IMR-90 (cell line): ENCODE measurements at regions of chr4 and their contacts with region 1.

Region 1: DNA sequence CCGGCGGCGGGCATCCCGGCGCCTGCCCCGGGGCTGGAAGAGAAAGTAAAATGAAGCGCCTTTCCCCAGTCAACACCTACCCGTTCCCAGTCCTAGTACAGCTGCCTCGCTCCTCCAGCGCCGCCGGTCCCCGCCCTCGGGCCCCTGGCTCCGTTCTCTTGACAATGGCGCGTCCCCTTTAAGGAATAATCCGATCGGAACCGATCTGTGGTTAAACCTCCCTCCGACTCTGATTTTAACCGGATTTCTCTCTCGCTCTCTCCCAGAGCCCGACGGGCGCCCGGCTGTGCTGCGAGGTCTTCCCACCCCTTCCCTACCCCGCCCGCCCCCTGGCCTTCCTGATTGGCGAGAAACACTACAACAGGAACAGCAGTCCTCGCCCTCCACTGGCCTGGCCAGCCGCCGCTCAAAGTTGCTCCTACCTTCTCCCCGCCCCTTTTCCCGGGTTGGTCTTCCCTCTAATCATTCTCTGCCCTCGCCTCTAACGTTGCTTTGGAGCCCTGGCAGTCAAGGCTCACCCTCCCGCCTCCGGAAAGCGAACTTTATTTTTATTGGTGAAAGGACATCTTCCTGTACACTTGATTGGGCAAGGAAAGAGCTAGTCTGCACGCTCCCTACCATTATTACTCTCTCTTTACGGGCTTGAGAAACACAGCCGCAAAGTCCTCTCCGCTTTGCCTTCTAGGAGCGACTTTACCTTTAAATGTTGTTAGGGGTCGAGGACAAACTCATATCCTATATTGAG is at the start of gene FRYL:
- DNase-seq: peak; percentile 99
- ATAC-seq: peak; percentile 94
- H3K4me3 ChIP-seq: peak within 1 kb of the TSS; percentile 69
- H3K27ac ChIP-seq: peak within 1 kb of the TSS; percentile 85
- H3K4me1 ChIP-seq: peaks cover 6% of the 10 kb centered on the region
- H3K27me3 ChIP-seq: no peaks in the 10 kb centered on the region
- CTCF ChIP-seq: no peak
- POLR2A ChIP-seq: peak; percentile 79
- RAD21 ChIP-seq: no peak
- total RNA-seq, gene FRYL: 77.4 and 82.2 TPM in 2 replicates

Region 2: GRCh38 chr4:48578132-48578968 is 201.8 kb before region 1 on chr4:
- CTCF ChIA-PET with region 1: interaction called, 4 read pairs
- POLR2A ChIA-PET with region 1: no interaction called
- dilution Hi-C with region 1: no loop called
- in situ Hi-C with region 1: no loop called
- intact Hi-C with region 1: loop called (anchors 1 kb)
- DNase-seq: peak; percentile 78
- ATAC-seq: peak; percentile 99
- H3K4me3 ChIP-seq: no peak overlapping the region
- H3K27ac ChIP-seq: no peak overlapping the region
- H3K4me1 ChIP-seq: no peaks in the 10 kb centered on the region
- H3K27me3 ChIP-seq: no peaks in the 10 kb centered on the region
- CTCF ChIP-seq: peak; percentile 87
- POLR2A ChIP-seq: no peak
- RAD21 ChIP-seq: peak; percentile 86

Region 3: GRCh38 chr4:48629458-48629857 is 150.7 kb before region 1 on chr4:
- CTCF ChIA-PET with region 1: no interaction called
- POLR2A ChIA-PET with region 1: no interaction called
- dilution Hi-C with region 1: no loop called
- in situ Hi-C with region 1: no loop called
- intact Hi-C with region 1: no loop called
- DNase-seq: no peak
- ATAC-seq: no peak
- H3K4me3 ChIP-seq: no peak overlapping the region
- H3K27ac ChIP-seq: no peak overlapping the region
- H3K4me1 ChIP-seq: peaks cover 2% of the 10 kb centered on the region; the same call in 1 of the 2 replicates
- H3K27me3 ChIP-seq: no peaks in the 10 kb centered on the region
- CTCF ChIP-seq: no peak
- POLR2A ChIP-seq: no peak
- RAD21 ChIP-seq: no peak

Region 4: DNA sequence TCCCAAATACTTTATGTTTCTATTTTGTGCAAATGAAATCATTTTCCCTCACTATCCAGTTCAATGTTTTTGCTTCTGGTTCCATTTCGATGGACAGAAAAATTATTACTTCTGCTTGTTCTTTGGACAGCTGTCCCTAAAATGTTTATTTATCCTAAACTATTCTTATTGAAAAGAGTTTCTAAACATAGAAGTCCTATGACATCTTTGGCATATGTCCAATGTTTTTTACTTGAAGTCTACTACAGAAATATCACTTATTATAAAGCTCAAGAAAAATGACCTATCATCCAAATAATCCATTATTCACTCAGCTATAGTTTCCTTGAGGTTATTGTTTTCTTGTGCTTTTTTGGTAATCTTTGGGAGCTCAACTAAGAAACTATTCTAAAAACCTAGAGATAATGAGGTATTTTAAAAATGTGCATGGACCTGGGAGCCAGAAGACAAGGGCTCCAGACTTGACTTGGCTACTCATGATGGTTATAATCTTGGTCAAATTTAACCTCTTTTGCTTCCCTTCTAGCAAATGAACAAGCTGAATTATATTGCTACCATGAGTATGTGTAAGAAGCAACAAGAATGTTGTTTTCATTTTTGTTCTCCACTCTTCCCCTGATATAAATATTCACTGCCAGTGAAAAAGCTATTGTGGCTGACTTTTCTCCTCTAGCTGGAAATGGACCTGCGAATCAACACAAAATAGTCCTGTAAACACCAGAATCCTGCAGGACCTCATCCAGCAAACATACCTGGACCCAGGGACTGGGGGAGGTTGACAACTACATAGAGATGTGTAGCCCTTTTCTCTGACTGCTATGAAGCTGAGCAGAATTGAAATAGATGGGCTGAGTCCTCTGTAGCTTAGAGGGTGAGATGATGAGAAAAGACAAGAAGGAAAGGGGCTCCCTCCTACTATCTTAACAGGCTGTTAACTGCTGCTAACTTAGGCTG is 137.5 kb before region 1 on chr4:
- CTCF ChIA-PET with region 1: no interaction called
- POLR2A ChIA-PET with region 1: no interaction called
- dilution Hi-C with region 1: no loop called
- in situ Hi-C with region 1: no loop called
- intact Hi-C with region 1: loop called (anchors 5 kb)
- DNase-seq: peak; percentile 33
- ATAC-seq: peak; percentile 68
- H3K4me3 ChIP-seq: no peak overlapping the region
- H3K27ac ChIP-seq: no peak overlapping the region
- H3K4me1 ChIP-seq: peaks cover 4% of the 10 kb centered on the region
- H3K27me3 ChIP-seq: no peaks in the 10 kb centered on the region
- CTCF ChIP-seq: no peak
- POLR2A ChIP-seq: no peak
- RAD21 ChIP-seq: no peak

Region 5: GRCh38 chr4:48704091-48704801 is 75.9 kb before region 1 on chr4:
- CTCF ChIA-PET with region 1: no interaction called
- POLR2A ChIA-PET with region 1: no interaction called
- dilution Hi-C with region 1: no loop called
- in situ Hi-C with region 1: no loop called
- intact Hi-C with region 1: loop called (anchors 5 kb)
- DNase-seq: no peak
- ATAC-seq: no peak
- H3K4me3 ChIP-seq: no peak overlapping the region
- H3K27ac ChIP-seq: no peak overlapping the region
- H3K4me1 ChIP-seq: peaks cover 5% of the 10 kb centered on the region; the same call in 1 of the 2 replicates
- H3K27me3 ChIP-seq: no peaks in the 10 kb centered on the region
- CTCF ChIP-seq: no peak
- POLR2A ChIP-seq: no peak
- RAD21 ChIP-seq: no peak

Region 6: DNA sequence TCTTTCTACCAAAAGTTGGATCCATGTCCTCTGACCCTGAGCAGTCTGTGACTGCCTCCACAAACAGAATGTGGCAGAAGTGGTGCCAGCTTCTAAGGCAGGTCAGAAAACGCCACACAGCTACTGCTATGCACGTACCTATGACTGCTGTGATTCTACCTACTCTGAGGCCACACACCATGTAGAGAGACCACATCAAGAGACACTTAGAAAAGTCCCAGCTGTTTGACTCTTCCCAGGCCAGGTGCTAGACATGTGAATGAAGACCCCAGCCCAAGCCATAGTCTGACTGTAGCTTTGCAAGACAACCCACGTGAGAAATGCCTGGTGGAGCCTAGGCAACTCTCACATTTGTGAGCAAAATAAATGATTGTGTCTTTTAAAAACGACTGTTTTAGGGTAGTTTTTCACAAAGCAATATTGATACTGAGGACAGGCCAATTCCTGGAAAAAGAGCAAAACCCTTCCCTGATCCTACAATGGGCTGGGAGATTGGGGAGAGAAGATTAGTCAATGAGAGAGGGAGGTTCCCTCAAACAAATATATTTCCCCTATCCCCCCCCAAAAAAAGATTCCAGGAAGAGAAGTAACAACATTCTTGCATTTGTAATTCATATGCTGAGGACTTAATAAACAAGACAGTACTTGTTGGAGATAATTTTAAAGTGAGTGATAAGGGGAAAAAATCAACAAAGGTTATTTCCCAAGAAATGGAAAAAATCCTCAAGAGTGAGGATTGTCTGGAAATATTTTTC is 33.4 kb before region 1 on chr4:
- CTCF ChIA-PET with region 1: no interaction called
- POLR2A ChIA-PET with region 1: interaction called, 10 read pairs
- dilution Hi-C with region 1: no loop called
- in situ Hi-C with region 1: no loop called
- intact Hi-C with region 1: loop called (anchors 2 kb)
- DNase-seq: no peak
- ATAC-seq: no peak
- H3K4me3 ChIP-seq: no peak overlapping the region
- H3K27ac ChIP-seq: no peak overlapping the region
- H3K4me1 ChIP-seq: no peaks in the 10 kb centered on the region; the same call in 1 of the 2 replicates
- H3K27me3 ChIP-seq: no peaks in the 10 kb centered on the region
- CTCF ChIP-seq: no peak
- POLR2A ChIP-seq: no peak
- RAD21 ChIP-seq: no peak

Region 7: DNA sequence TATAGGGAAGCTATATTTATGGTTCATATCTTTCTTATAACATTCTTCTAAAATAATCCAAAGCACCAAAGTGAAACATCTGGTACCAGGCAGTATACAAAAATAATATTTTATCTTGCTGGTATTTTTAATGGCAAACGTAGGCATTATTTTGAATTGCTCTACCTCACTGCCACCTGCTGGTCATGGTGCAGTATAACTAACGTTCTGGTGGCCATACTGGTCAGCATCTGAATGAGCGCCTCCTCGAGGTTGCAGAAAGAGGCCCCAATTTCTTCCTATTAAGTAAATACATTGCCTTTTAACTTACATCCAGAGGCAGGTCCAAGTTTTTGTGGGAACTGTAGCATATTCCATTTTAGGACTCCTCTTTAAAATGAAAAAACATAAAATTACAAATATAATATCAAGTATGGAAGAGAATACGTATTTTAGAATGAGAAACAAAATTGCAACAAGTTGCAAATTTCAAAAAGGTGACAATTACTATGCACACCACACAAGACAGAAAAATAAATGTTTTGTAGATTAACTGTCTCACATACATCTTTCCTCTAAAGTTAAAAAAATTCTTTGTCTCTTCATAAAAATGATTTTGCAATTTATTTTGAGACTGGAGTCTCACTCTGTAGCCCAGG is 183.0 kb after region 1 on chr4:
- CTCF ChIA-PET with region 1: no interaction called
- POLR2A ChIA-PET with region 1: no interaction called
- dilution Hi-C with region 1: no loop called
- in situ Hi-C with region 1: no loop called
- intact Hi-C with region 1: loop called (anchors 1 kb)
- DNase-seq: peak; percentile 90
- ATAC-seq: peak; percentile 98
- H3K4me3 ChIP-seq: no peak overlapping the region
- H3K27ac ChIP-seq: no peak overlapping the region
- H3K4me1 ChIP-seq: peaks cover 2% of the 10 kb centered on the region; the same call in 1 of the 2 replicates
- H3K27me3 ChIP-seq: peaks cover 2% of the 10 kb centered on the region; the same call in 1 of the 2 replicates
- CTCF ChIP-seq: peak; percentile 100
- POLR2A ChIP-seq: peak; percentile 60; the same call in 1 of the 2 replicates
- RAD21 ChIP-seq: peak; percentile 98